ENCODE measurements at regions of chr5 and their contacts with region 1.

Region 1: DNA sequence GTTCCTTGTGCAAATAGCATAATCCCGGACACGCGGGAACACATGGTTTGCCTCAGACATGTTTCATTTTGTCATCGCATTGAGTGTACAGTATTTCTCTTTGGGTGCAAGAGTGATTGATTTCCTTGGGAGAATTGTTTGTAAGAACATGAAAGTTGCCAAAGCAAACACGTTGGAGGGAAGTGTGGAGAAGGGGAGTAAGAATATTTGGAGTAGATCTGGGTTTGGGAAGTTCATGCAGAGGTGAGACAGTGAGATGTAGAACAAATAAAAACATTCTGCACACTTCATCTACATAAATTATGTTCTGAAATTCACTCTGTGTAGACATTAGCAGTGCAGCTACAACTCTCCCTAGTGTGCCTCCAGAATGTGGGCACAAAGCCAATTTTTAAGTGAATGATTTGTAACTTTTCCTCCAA is 24.0 kb downstream of the FOXD1 start:
- DNase-seq: no peak
- H3K4me3 ChIP-seq: no peak overlapping the region
- H3K27ac ChIP-seq: no peak overlapping the region
- H3K27me3 ChIP-seq: no peaks in the 10 kb centered on the region
- CTCF ChIP-seq: no peak

Region 2: DNA sequence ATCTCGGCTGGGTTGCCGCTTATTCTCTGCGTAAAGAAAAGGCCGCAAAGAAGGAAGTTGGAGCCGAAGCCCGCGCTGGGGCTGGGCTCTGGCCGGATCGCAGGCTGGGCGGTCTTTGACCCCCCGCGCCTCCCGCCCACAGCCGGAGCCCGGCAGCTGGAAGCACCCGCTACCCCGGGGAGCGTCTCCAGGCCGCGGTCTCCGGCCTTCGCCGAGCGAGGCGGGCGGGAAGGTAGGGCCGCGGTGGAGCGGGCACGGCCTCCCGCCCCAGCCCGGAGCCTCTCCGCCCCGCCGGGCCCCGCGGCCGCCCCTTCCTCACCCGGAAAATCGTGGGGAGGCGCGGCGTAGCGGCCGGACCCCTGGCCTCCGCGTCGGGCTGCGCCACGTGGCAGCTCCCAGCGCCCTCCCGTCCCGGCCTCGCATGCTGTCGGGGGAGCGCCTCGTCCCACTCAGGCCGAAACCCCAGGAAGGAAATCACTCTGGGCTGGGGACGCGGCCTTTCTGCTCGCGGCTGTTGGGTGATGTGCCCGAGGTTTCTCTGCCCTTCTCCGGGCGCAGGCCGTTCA is 12.1 kb after region 1 on chr5:
- CTCF ChIA-PET with region 1: interaction called, 4 read pairs
- POLR2A ChIA-PET with region 1: interaction called, 10 read pairs
- DNase-seq: no peak
- H3K4me3 ChIP-seq: peak overlapping the region; percentile 41
- H3K27ac ChIP-seq: peak overlapping the region; percentile 86
- H3K27me3 ChIP-seq: no peaks in the 10 kb centered on the region
- CTCF ChIP-seq: no peak